Mammary epithelial cell (primary cell): ENCODE measurements at regions of chr5 and their contacts with region 1.

Region 1: DNA sequence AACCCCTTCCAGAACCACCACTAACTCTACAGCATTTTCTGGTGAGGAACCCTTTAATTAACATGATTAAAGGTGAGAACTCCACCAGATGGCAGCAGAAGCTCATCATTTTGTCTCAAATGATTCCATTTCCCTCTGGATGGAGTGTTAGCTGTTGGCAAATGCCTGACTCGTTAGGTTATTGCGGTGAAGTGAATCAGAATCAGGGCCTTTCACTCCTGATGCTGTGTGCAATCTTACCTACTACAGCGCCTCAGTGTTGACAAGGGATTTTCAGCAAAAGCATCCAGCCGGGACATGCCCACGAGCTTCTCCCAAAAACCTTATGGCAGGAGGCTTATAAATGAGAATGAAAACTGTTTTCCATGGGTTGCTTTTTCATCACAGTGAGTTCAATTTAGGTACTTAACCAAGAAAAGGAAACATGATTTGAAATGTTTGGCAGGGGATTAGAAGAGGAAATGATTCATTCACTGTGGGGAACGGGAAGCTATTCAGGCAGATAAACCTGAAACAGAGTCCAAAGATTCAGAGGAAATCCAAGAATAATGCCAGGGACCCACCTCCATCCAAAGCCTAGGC is 48.0 kb upstream of the CAST start:
- DNase-seq: peak; percentile 94
- H3K4me3 ChIP-seq: no peak overlapping the region
- H3K27ac ChIP-seq: peak overlapping the region; percentile 72
- H3K4me1 ChIP-seq: peaks cover 22% of the 10 kb centered on the region
- H3K27me3 ChIP-seq: no peaks in the 10 kb centered on the region
- CTCF ChIP-seq: peak; percentile 41 to 52

Region 2: GRCh38 chr5:96344678-96345577 is 269.3 kb before region 1 on chr5:
- CTCF ChIA-PET with region 1: interaction called, 5 read pairs
- dilution Hi-C with region 1: no loop called
- in situ Hi-C with region 1: loop called in 1 of 2 experiments (anchors 5 kb)
- intact Hi-C with region 1: no loop called
- DNase-seq: peak; percentile 49
- H3K4me3 ChIP-seq: no peak overlapping the region
- H3K27ac ChIP-seq: no peak overlapping the region
- H3K4me1 ChIP-seq: no peaks in the 10 kb centered on the region
- H3K27me3 ChIP-seq: no peaks in the 10 kb centered on the region
- CTCF ChIP-seq: peak; percentile 51 to 63

Region 3: GRCh38 chr5:96384353-96384752 is 229.8 kb before region 1 on chr5:
- CTCF ChIA-PET with region 1: no interaction called
- dilution Hi-C with region 1: no loop called
- in situ Hi-C with region 1: no loop called
- intact Hi-C with region 1: no loop called
- DNase-seq: peak; percentile 92
- H3K4me3 ChIP-seq: no peak overlapping the region
- H3K27ac ChIP-seq: no peak overlapping the region
- H3K4me1 ChIP-seq: peaks cover 14% of the 10 kb centered on the region
- H3K27me3 ChIP-seq: no peaks in the 10 kb centered on the region
- CTCF ChIP-seq: no peak

Region 4: DNA sequence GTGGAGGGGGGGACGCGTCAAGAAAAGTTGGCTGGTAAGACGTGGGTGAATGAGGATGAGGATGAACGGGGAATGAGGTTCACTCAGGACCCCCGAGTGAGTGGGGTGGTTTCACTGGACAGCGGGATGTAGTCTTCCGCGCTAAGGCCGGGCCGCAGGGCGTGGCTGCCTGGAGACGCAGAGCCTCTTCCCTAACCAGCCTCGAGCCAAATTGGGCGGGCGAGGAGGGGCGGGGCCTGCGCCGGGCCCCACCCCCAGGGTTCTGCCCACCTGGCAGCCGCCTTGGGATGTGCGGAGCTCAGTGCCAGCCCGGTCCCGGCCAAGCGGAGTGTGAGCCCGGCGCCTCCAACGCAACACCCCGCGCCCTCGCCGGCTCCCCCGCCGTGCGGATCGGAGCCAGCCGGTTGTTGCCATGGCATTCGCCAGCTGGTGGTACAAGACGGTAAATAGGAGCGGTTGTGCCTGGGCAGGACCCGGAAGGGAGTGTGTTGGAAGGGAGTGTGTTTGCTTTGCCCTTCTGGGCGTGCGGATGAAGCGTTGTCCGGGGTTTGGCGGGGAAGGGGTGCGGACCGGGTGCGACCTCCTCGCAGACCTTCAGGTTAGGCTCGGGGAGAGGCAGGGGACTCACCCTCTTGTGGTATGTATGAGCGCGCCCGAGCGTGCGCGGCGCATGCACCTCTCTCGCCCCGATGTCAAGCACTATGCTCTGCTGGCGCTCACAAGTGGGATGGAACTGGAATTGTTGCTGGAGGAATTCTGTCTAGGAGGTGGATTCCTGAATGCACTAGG is 48.7 kb after region 1 on chr5:
- CTCF ChIA-PET with region 1: interaction called, 9 read pairs
- dilution Hi-C with region 1: loop called (anchors 5 kb)
- in situ Hi-C with region 1: loop called in 1 of 2 experiments (anchors 10 kb)
- intact Hi-C with region 1: loop called (anchors 1 kb)
- DNase-seq: peak; percentile 94
- H3K4me3 ChIP-seq: peak overlapping the region; percentile 80 to 99 (median 94)
- H3K27ac ChIP-seq: peak overlapping the region; percentile 96
- H3K4me1 ChIP-seq: peaks cover 33% of the 10 kb centered on the region
- H3K27me3 ChIP-seq: no peaks in the 10 kb centered on the region
- CTCF ChIP-seq: peak in 1 of 2 donors; percentile 6

Region 5: DNA sequence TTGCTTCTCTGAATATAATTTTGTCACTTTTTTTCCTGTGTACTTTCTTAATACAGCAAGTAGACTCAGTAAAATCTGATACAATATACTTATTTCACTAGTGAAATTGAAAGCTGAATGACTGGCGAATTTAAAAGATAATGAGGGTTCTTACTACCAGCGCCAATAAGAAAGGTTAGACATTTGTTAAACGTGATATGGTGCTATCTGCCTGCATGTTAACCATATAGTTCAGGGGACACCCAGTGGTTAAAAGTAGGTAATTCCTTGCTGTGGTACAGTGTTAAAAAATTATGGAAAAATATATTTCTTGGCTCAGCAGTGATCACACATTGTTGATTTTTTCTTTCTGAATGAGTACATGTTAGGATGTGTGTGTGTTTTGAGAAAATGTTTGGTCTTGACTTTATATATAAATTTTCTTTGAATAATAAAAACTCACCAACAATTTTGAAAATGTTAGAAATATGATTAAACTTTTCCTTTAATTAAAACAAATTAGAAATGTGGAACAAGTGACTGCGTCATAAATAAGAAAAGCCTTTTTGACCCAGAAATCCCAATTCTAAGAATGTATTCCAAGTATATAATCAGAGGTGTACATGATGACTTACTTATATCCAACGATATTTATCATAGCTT is 73.7 kb after region 1 on chr5:
- CTCF ChIA-PET with region 1: interaction called, 8 read pairs
- dilution Hi-C with region 1: no loop called
- in situ Hi-C with region 1: no loop called
- intact Hi-C with region 1: loop called (anchors 1 kb)
- DNase-seq: no peak
- H3K4me3 ChIP-seq: no peak overlapping the region
- H3K27ac ChIP-seq: no peak overlapping the region
- H3K4me1 ChIP-seq: peaks cover 28% of the 10 kb centered on the region
- H3K27me3 ChIP-seq: no peaks in the 10 kb centered on the region
- CTCF ChIP-seq: peak; percentile 71 to 73

Region 6: GRCh38 chr5:96729156-96729555 is 115.0 kb after region 1 on chr5:
- CTCF ChIA-PET with region 1: interaction called, 8 read pairs
- dilution Hi-C with region 1: no loop called
- in situ Hi-C with region 1: no loop called
- intact Hi-C with region 1: loop called (anchors 1 kb)
- DNase-seq: no peak
- H3K4me3 ChIP-seq: no peak overlapping the region
- H3K27ac ChIP-seq: no peak overlapping the region
- H3K4me1 ChIP-seq: peaks cover 14% of the 10 kb centered on the region
- H3K27me3 ChIP-seq: no peaks in the 10 kb centered on the region
- CTCF ChIP-seq: peak; percentile 15 to 34

Region 7: DNA sequence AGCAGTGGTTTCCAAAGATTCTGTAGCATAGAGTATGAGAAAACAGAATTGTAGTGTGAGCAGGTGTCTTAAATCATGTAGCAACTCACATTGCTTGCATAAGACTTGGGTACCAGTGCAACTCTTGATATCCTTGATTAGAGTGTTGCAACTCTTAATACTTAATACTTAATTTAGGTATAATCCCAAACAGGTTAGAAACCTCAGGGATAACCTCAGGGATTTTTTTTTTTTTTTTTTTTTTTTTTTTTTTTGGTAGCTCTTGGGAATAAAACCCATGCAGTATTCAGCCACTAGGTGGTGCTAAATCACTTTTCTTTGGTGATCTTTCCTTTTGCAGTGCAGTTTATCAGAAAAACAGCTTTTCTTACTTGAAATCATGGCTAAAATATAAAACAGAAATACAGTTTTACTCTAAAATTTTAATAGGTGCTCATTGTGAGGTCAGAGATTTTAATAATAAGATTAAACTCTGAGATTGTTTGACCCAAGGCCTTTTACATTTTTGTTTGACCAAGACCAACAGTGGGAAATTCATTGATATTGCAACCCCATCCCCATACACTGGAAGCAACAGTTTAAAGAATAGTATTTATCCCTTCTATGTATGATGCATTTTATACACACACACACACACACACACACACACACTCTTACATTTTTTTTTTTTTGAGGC is 138.3 kb after region 1 on chr5:
- CTCF ChIA-PET with region 1: interaction called, 3 read pairs
- dilution Hi-C with region 1: no loop called
- in situ Hi-C with region 1: no loop called
- intact Hi-C with region 1: loop called (anchors 2 kb)
- DNase-seq: peak; percentile 12
- H3K4me3 ChIP-seq: no peak overlapping the region
- H3K27ac ChIP-seq: no peak overlapping the region
- H3K4me1 ChIP-seq: no peaks in the 10 kb centered on the region
- H3K27me3 ChIP-seq: no peaks in the 10 kb centered on the region
- CTCF ChIP-seq: peak; percentile 54 to 62

Region 8: DNA sequence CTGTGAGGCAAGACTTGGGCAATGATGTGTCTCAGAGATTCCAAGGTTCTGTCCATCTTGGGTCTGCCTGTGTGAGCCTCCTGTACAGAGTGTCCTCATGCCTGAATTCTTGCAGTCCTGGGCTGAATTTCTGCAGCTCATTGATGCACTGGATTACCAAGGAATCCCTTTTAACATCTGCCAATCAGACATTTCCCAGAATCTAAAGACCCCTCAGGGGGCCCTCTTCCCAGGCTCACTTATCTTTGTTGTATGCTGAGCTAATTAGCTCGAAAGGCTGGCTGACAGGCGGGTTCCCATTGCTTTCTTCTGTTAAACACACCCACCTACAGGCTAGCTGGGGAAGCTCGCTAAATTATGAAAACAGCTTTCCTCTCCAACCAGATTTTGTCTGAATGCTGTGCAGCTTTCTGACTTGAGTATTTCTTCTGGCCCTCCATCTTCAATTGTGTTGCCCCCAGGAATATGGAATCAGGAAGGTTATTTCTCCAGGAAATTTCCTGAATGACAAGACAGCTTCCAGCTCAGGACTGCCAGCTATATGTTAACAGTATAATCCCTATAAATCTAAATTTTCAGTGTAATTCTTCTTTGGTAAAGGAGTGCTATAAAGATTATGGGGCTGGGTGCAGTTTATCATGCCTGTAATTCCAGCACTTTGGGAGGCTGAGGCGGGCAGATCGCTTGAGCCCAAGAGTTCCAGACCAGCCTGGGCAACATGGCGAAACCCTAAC is 528.5 kb after region 1 on chr5 and contains the start of gene LIX1:
- CTCF ChIA-PET with region 1: no interaction called
- dilution Hi-C with region 1: no loop called
- in situ Hi-C with region 1: no loop called
- intact Hi-C with region 1: loop called (anchors 1 kb)
- DNase-seq: peak; percentile 8
- H3K4me3 ChIP-seq: no peak within 1 kb of the TSS
- H3K27ac ChIP-seq: no peak within 1 kb of the TSS
- H3K4me1 ChIP-seq: no peaks in the 10 kb centered on the region
- H3K27me3 ChIP-seq: peaks cover 2% of the 10 kb centered on the region
- CTCF ChIP-seq: peak; percentile 54 to 55
- total RNA-seq, gene LIX1: not detected